B cell (primary cell): ENCODE measurements at regions of chr3 and their contacts with region 1.

Region 1: GRCh38 chr3:119293871-119294695 is at the start of gene ARHGAP31:
- DNase-seq: peak; percentile 89
- ATAC-seq: peak; percentile 76
- H3K4me3 ChIP-seq: peak within 1 kb of the TSS; percentile 61 to 89 (median 80)
- H3K4me3 Mint-ChIP-seq: peak within 1 kb of the TSS; percentile 87
- H3K27ac ChIP-seq: peak within 1 kb of the TSS; percentile 91 to 96
- H3K27ac Mint-ChIP-seq: peak within 1 kb of the TSS; percentile 91
- H3K4me1 ChIP-seq: peaks cover 30 to 46% of the 10 kb centered on the region in 2 donors
- H3K4me1 Mint-ChIP-seq: peaks cover 58% of the 10 kb centered on the region
- H3K27me3 ChIP-seq: peaks cover 0 to 7% (median 0%) of the 10 kb centered on the region in 4 experiments
- H3K27me3 Mint-ChIP-seq: no peaks in the 10 kb centered on the region
- CTCF ChIP-seq: no peak
- total RNA-seq, gene ARHGAP31: 7.8 and 8.3 TPM in 2 replicates

Region 2: DNA sequence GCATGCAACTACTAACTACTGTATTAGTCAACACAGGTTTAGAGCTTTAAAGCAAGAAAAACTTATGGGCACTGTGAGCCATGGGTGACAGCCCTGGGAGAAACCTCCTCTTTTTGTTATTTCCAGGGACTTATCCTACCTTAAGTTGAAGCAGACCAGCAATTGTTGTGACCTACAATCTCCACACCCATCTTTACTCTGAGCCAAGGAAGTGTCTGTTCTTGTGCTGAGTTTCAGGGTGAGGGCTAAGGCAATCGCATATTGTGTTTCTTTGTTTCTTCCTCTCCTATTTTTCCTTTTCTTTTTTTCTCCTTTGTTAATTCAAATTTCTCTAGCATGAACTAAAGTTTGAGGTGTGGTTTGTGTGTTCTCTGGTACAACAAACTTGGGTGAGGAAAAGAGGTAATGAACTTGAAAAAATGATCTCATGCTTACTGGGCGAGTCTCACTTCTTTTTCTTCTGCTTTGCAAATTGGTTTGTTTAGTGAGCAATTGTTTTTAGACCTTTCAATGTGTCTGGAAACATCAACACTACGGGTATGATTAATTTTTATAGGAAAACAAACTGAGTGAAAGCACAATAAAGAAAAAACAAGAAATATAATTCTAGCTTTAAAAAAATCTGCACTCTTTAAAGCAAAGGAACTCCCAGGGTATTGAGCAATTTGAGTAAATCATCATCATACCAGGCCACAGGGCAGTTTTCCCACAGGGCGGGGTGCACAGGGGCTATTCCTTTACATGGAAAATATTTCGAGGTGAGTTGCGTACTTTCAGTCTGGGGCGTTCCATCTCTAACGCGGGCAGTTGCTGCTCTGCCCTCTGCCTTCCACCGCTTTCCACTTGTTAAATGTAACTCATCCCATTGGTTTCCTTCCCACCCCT is 118.0 kb before region 1 on chr3:
- CTCF ChIA-PET with region 1: no interaction called
- POLR2A ChIA-PET with region 1: no interaction called
- intact Hi-C with region 1: no loop called
- DNase-seq: no peak
- ATAC-seq: no peak
- H3K4me3 ChIP-seq: no peak overlapping the region
- H3K4me3 Mint-ChIP-seq: no peak overlapping the region
- H3K27ac ChIP-seq: no peak overlapping the region
- H3K27ac Mint-ChIP-seq: no peak overlapping the region
- H3K4me1 ChIP-seq: no peaks in the 10 kb centered on the region
- H3K4me1 Mint-ChIP-seq: no peaks in the 10 kb centered on the region
- H3K27me3 ChIP-seq: no peaks in the 10 kb centered on the region
- H3K27me3 Mint-ChIP-seq: peaks cover 39% of the 10 kb centered on the region
- CTCF ChIP-seq: no peak

Region 3: DNA sequence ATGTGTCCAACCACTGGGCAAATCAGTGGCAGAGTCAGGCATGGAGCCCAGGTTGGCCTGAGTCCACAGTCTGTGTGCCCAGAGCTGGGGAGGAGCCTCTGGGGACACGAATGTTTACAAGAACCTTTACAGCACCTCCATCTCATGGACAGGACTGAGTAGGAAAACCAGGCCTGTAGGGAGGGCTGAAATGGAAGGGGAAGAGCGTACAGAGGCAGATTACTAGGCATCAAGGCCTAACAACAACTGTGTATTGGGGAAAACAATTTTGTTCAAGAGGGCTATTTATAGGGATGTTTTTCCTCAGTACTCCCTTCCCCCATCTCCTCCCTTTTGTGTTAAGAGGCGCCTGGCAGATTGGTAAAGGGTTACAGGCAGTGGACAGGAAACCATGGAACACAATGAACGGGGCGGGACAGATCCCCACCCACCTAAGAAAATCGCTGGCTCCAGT is 15.0 kb before region 1 on chr3:
- CTCF ChIA-PET with region 1: interaction called, 12 read pairs
- POLR2A ChIA-PET with region 1: no interaction called
- intact Hi-C with region 1: no loop called
- DNase-seq: no peak
- ATAC-seq: no peak
- H3K4me3 ChIP-seq: no peak overlapping the region
- H3K4me3 Mint-ChIP-seq: no peak overlapping the region
- H3K27ac ChIP-seq: no peak overlapping the region
- H3K27ac Mint-ChIP-seq: no peak overlapping the region
- H3K4me1 ChIP-seq: no peaks in the 10 kb centered on the region
- H3K4me1 Mint-ChIP-seq: no peaks in the 10 kb centered on the region
- H3K27me3 ChIP-seq: no peaks in the 10 kb centered on the region
- H3K27me3 Mint-ChIP-seq: no peaks in the 10 kb centered on the region
- CTCF ChIP-seq: no peak